GM12878 (cell line): ENCODE measurements at regions of chr10 and their contacts with region 1.

Region 1: GRCh38 chr10:19944911-19945663 is 128.9 kb downstream of the PLXDC2 start:
- DNase-seq: no peak
- ATAC-seq: peak; percentile 37
- H3K4me3 ChIP-seq: no peak overlapping the region
- H3K27ac ChIP-seq: no peak overlapping the region
- H3K4me1 ChIP-seq: no peaks in the 10 kb centered on the region
- H3K27me3 ChIP-seq: no peaks in the 10 kb centered on the region
- CTCF ChIP-seq: no peak
- EP300 ChIP-seq: no peak
- POLR2A ChIP-seq: no peak
- RAD21 ChIP-seq: no peak

Region 2: GRCh38 chr10:19819419-19820033 is 125.6 kb before region 1 on chr10:
- CTCF ChIA-PET with region 1: no interaction called
- POLR2A ChIA-PET with region 1: no interaction called
- RAD21 ChIA-PET with region 1: interaction called, 3 read pairs
- SMC1A ChIA-PET with region 1: no interaction called
- in situ Hi-C with region 1: no loop called
- intact Hi-C with region 1: loop called (anchors 2 kb)
- DNase-seq: no peak
- ATAC-seq: peak; percentile 10; the same call in 1 of the 3 replicates
- H3K4me3 ChIP-seq: no peak overlapping the region
- H3K27ac ChIP-seq: no peak overlapping the region
- H3K4me1 ChIP-seq: no peaks in the 10 kb centered on the region
- H3K27me3 ChIP-seq: peaks cover 1 to 3% of the 10 kb centered on the region in 2 experiments; a peak in 3 of 4 replicates
- CTCF ChIP-seq: peak; percentile 46 to 72 (median 55); a peak in 5 of 6 replicates
- EP300 ChIP-seq: no peak
- POLR2A ChIP-seq: no peak
- RAD21 ChIP-seq: peak; percentile 62

Region 3: DNA sequence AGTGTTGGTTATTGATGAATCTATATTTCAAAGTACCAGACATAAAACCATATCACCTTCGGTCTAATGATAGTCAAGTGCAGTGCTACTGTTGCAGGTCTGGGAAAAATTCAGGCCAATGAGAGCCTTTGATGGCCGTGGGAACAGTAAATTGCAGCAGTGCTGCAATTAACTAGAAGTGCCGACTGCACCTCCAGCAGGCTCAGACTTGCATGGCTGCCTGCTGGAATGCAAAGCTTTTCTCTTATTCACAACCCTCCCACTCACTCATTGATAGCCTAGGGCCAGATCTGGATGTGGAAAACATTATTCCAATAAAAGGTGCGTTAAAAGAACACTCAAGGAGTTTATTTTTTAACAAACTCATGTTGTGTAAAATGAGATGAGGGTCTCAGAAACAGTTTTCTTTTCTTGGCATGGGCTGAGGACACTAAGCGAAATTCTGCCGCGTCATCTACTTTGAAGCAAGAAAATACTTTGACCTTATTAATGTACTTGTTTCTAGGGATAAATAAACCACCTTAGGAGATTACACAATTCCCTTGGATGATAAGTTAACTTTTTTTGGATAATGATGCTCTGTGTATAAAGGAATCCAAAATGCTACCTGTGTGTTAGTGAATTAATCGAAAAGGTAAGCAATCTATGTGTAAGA is 111.8 kb before region 1 on chr10:
- CTCF ChIA-PET with region 1: no interaction called
- POLR2A ChIA-PET with region 1: no interaction called
- RAD21 ChIA-PET with region 1: no interaction called
- SMC1A ChIA-PET with region 1: no interaction called
- in situ Hi-C with region 1: no loop called
- intact Hi-C with region 1: no loop called
- DNase-seq: no peak
- ATAC-seq: no peak
- H3K4me3 ChIP-seq: no peak overlapping the region
- H3K27ac ChIP-seq: no peak overlapping the region
- H3K4me1 ChIP-seq: no peaks in the 10 kb centered on the region
- H3K27me3 ChIP-seq: no peaks in the 10 kb centered on the region
- CTCF ChIP-seq: no peak
- EP300 ChIP-seq: no peak
- POLR2A ChIP-seq: no peak
- RAD21 ChIP-seq: no peak

Region 4: GRCh38 chr10:19904193-19904661 is 40.9 kb before region 1 on chr10:
- CTCF ChIA-PET with region 1: no interaction called
- POLR2A ChIA-PET with region 1: no interaction called
- RAD21 ChIA-PET with region 1: interaction called, 4 read pairs
- SMC1A ChIA-PET with region 1: interaction called, 6 read pairs
- in situ Hi-C with region 1: no loop called
- intact Hi-C with region 1: loop called (anchors 2 kb)
- DNase-seq: peak; percentile 27
- ATAC-seq: peak; percentile 98
- H3K4me3 ChIP-seq: no peak overlapping the region
- H3K27ac ChIP-seq: no peak overlapping the region
- H3K4me1 ChIP-seq: no peaks in the 10 kb centered on the region
- H3K27me3 ChIP-seq: no peaks in the 10 kb centered on the region
- CTCF ChIP-seq: no peak
- EP300 ChIP-seq: peak; percentile 9 to 59; a peak in 2 of 4 replicates
- POLR2A ChIP-seq: no peak
- RAD21 ChIP-seq: no peak

Region 5: GRCh38 chr10:19911886-19912285 is 33.2 kb before region 1 on chr10:
- CTCF ChIA-PET with region 1: interaction called, 3 read pairs
- POLR2A ChIA-PET with region 1: no interaction called
- RAD21 ChIA-PET with region 1: no interaction called
- SMC1A ChIA-PET with region 1: interaction called, 11 read pairs
- in situ Hi-C with region 1: no loop called
- intact Hi-C with region 1: no loop called
- DNase-seq: no peak
- ATAC-seq: no peak
- H3K4me3 ChIP-seq: no peak overlapping the region
- H3K27ac ChIP-seq: no peak overlapping the region
- H3K4me1 ChIP-seq: no peaks in the 10 kb centered on the region
- H3K27me3 ChIP-seq: no peaks in the 10 kb centered on the region
- CTCF ChIP-seq: no peak
- EP300 ChIP-seq: no peak
- POLR2A ChIP-seq: no peak
- RAD21 ChIP-seq: no peak

Region 6: GRCh38 chr10:19930936-19931893 is 13.9 kb before region 1 on chr10:
- CTCF ChIA-PET with region 1: interaction called, 12 read pairs
- POLR2A ChIA-PET with region 1: no interaction called
- RAD21 ChIA-PET with region 1: interaction called, 4 read pairs
- SMC1A ChIA-PET with region 1: interaction called, 18 read pairs
- in situ Hi-C with region 1: no loop called
- intact Hi-C with region 1: loop called (anchors 2 kb)
- DNase-seq: no peak
- ATAC-seq: peak; percentile 63
- H3K4me3 ChIP-seq: no peak overlapping the region
- H3K27ac ChIP-seq: no peak overlapping the region
- H3K4me1 ChIP-seq: no peaks in the 10 kb centered on the region
- H3K27me3 ChIP-seq: no peaks in the 10 kb centered on the region
- CTCF ChIP-seq: no peak
- EP300 ChIP-seq: no peak
- POLR2A ChIP-seq: no peak
- RAD21 ChIP-seq: no peak

Region 7: GRCh38 chr10:19958787-19959186 is 13.7 kb after region 1 on chr10:
- CTCF ChIA-PET with region 1: interaction called, 7 read pairs
- POLR2A ChIA-PET with region 1: interaction called, 9 read pairs
- RAD21 ChIA-PET with region 1: interaction called, 8 read pairs
- SMC1A ChIA-PET with region 1: interaction called, 23 read pairs
- in situ Hi-C with region 1: no loop called
- intact Hi-C with region 1: no loop called
- DNase-seq: peak; percentile 37
- ATAC-seq: peak; percentile 98
- H3K4me3 ChIP-seq: no peak overlapping the region
- H3K27ac ChIP-seq: no peak overlapping the region
- H3K4me1 ChIP-seq: no peaks in the 10 kb centered on the region
- H3K27me3 ChIP-seq: no peaks in the 10 kb centered on the region
- CTCF ChIP-seq: no peak
- EP300 ChIP-seq: no peak; a peak in 1 of 4 replicates
- POLR2A ChIP-seq: no peak
- RAD21 ChIP-seq: no peak

Region 8: GRCh38 chr10:20004087-20004523 is 59.0 kb after region 1 on chr10:
- CTCF ChIA-PET with region 1: interaction called, 4 read pairs
- POLR2A ChIA-PET with region 1: interaction called, 8 read pairs
- RAD21 ChIA-PET with region 1: interaction called, 6 read pairs
- SMC1A ChIA-PET with region 1: interaction called, 15 read pairs
- in situ Hi-C with region 1: no loop called
- intact Hi-C with region 1: loop called (anchors 2 kb)
- DNase-seq: peak; percentile 28
- ATAC-seq: peak; percentile 85
- H3K4me3 ChIP-seq: no peak overlapping the region
- H3K27ac ChIP-seq: peak overlapping the region; percentile 75
- H3K4me1 ChIP-seq: peaks cover 10% of the 10 kb centered on the region
- H3K27me3 ChIP-seq: no peaks in the 10 kb centered on the region
- CTCF ChIP-seq: no peak
- EP300 ChIP-seq: no peak
- POLR2A ChIP-seq: no peak
- RAD21 ChIP-seq: no peak

Region 9: DNA sequence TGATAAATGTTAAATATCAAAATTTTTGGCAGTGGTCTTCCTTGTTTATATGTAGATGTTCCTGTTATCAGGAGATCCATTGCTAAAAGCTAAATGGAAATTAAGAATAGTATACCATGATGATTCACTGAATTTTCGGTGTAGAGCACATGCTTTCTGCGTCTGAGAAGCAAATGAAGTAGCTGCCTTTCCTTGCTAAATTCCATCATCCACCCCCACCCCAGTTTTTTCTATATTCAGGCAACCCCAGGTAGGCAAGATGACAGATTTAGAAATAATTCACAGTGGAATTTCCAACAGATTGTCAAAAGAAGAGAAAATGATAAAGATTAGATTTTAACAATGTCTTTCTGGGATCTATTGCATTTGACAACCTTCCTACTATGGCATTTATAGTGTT is 103.1 kb after region 1 on chr10:
- CTCF ChIA-PET with region 1: no interaction called
- POLR2A ChIA-PET with region 1: no interaction called
- RAD21 ChIA-PET with region 1: no interaction called
- SMC1A ChIA-PET with region 1: no interaction called
- in situ Hi-C with region 1: no loop called
- intact Hi-C with region 1: no loop called
- DNase-seq: no peak
- ATAC-seq: no peak
- H3K4me3 ChIP-seq: no peak overlapping the region
- H3K27ac ChIP-seq: no peak overlapping the region
- H3K4me1 ChIP-seq: no peaks in the 10 kb centered on the region
- H3K27me3 ChIP-seq: no peaks in the 10 kb centered on the region
- CTCF ChIP-seq: no peak
- EP300 ChIP-seq: no peak
- POLR2A ChIP-seq: no peak
- RAD21 ChIP-seq: no peak